ENCODE measurements at regions of chrX and their contacts with region 1.

Region 1: GRCh38 chrX:43860646-43861370 is 21.4 kb downstream of the MAOB start:
- DNase-seq: no peak
- H3K4me3 ChIP-seq: no peak overlapping the region
- H3K27ac ChIP-seq: no peak overlapping the region
- H3K4me1 ChIP-seq: peaks cover 0 to 7% of the 10 kb centered on the region in 2 donors
- H3K27me3 ChIP-seq: no peaks in the 10 kb centered on the region
- CTCF ChIP-seq: no peak

Region 2: DNA sequence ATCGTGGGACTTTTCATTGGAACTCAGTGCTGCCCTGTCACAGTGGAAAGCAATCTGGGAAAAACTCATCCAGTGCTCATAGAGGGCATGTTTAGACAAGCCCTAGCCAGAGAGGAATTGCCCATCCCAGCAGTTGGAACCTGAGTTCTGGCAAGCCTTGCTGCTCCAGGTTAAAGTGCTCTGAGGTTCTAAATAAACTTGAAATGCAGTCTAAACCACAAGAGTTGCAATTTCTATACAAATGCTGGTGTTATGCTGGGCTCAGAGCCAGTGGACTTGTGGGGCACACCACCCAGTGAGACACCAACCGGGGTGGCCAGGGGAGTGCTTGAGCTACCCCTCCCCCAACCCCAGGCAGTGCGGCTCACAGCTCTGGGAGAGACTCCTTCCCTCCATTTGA is 940.1 kb before region 1 on chrX:
- intact Hi-C with region 1: no loop called
- DNase-seq: no peak
- H3K4me3 ChIP-seq: no peak overlapping the region
- H3K27ac ChIP-seq: no peak overlapping the region
- H3K4me1 ChIP-seq: no peaks in the 10 kb centered on the region
- H3K27me3 ChIP-seq: no peaks in the 10 kb centered on the region
- CTCF ChIP-seq: no peak

Region 3: DNA sequence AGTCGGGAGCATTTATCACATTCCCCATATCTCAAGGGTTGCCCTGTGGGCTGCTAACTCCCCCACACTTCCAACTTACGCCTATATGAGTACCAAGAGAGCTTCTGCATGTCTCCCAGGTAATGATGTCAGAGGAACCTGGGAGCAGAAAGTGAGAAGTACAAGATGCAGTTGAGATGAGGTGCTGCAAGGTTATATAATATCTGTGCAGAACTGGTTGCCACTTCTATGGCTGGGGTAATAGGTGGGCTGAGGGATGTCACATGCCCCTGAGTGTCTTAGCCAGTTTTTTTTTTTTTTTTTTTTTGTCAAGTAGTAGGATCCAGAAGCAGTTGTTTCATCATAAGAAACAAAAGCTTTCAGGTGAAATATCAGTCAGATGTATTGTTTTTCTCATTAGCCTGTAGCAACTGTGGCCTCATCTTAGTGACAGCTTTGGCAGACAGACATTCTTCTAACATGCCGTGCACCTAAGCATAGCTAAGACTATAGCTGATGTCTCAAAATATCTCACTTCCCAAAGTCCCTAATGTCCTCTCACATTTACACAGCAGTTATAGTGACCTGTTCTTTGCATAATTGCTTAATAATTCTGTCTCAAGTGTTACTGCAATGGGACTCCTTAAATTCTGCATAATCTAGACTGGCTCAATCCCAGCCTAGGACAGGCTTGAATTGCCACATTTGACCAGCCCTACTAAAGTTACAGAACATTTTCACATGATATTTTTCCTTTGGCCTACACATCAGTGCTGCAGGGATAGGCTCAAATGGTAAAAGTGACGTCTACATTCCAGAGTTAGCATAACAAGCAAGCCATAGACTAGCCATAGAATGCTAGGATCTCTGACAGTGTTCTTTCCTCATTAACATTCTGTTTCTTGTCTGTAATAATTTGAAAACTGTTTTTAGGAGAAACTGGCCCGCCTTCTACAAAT is 39.3 kb after region 1 on chrX:
- intact Hi-C with region 1: loop called (anchors 5 kb)
- DNase-seq: no peak
- H3K4me3 ChIP-seq: no peak overlapping the region
- H3K27ac ChIP-seq: peak overlapping the region; percentile 29 to 62
- H3K4me1 ChIP-seq: no peaks in the 10 kb centered on the region
- H3K27me3 ChIP-seq: no peaks in the 10 kb centered on the region
- CTCF ChIP-seq: no peak

Region 4: DNA sequence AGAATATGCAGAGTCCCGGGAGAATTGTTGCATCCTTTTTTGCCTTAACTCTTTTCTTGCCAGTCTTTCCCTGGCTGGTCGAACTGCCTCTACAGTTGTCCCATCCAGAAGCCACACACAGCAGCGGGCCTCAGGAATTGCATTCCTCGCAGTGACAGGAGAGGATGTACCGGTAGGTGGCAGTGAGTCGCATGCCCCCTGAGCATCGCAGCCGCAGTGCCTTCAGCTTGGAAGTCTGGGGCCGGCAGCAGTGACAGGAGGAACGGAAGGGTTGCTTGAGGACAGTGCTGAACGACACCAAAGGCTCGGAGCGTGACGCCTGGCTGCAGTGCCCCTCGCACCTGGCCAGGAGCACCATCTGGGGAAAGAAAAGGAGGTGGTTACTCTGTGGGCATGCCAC is 88.9 kb after region 1 on chrX:
- intact Hi-C with region 1: no loop called
- DNase-seq: no peak
- H3K4me3 ChIP-seq: no peak overlapping the region
- H3K27ac ChIP-seq: no peak overlapping the region
- H3K4me1 ChIP-seq: no peaks in the 10 kb centered on the region
- H3K27me3 ChIP-seq: no peaks in the 10 kb centered on the region
- CTCF ChIP-seq: peak in 2 of 3 experiments; percentile 27 to 36